ENCODE measurements at regions of chr9 and their contacts with region 1.

Region 1: GRCh38 chr9:16726718-16727451 is 143.6 kb downstream of the BNC2 start:
- DNase-seq: peak; percentile 83
- ATAC-seq: peak; percentile 83
- H3K4me3 ChIP-seq: peak overlapping the region; percentile 62
- H3K27ac ChIP-seq: peak overlapping the region; percentile 97
- H3K4me1 ChIP-seq: peaks cover 12% of the 10 kb centered on the region
- H3K27me3 ChIP-seq: no peaks in the 10 kb centered on the region
- CTCF ChIP-seq: no peak
- POLR2A ChIP-seq: peak; percentile 72
- RAD21 ChIP-seq: no peak

Region 2: DNA sequence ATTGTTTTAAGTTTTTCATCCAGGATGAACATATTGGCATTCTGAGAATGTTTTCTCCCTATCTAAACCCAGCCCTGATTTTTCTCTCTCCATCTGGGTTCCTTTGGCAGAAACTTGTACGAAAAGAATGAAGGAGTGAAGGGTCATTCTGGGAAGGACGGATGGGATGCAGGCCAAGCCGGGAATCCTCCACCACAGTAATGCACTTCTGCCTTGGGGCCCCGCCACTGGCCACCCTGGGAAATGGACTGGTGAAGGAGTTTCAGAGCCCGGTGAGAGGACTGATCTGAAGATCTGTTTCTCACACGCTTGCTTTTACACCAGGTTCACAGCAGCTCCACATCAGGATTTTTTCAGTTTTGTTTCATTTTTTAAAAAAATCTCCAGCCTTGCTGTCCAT is 411.2 kb before region 1 on chr9:
- CTCF ChIA-PET with region 1: no interaction called
- POLR2A ChIA-PET with region 1: no interaction called
- dilution Hi-C with region 1: no loop called
- in situ Hi-C with region 1: no loop called
- intact Hi-C with region 1: no loop called
- DNase-seq: no peak
- ATAC-seq: no peak; the same call in 1 of the 2 replicates
- H3K4me3 ChIP-seq: no peak overlapping the region
- H3K27ac ChIP-seq: no peak overlapping the region
- H3K4me1 ChIP-seq: peaks cover 1% of the 10 kb centered on the region; the same call in 1 of the 2 replicates
- H3K27me3 ChIP-seq: no peaks in the 10 kb centered on the region; the same call in 1 of the 2 replicates
- CTCF ChIP-seq: no peak
- POLR2A ChIP-seq: no peak
- RAD21 ChIP-seq: no peak

Region 3: GRCh38 chr9:16371306-16371705 is 355.6 kb before region 1 on chr9:
- CTCF ChIA-PET with region 1: no interaction called
- POLR2A ChIA-PET with region 1: no interaction called
- dilution Hi-C with region 1: no loop called
- in situ Hi-C with region 1: no loop called
- intact Hi-C with region 1: no loop called
- DNase-seq: no peak
- ATAC-seq: no peak
- H3K4me3 ChIP-seq: no peak overlapping the region
- H3K27ac ChIP-seq: no peak overlapping the region
- H3K4me1 ChIP-seq: peaks cover 10% of the 10 kb centered on the region
- H3K27me3 ChIP-seq: no peaks in the 10 kb centered on the region
- CTCF ChIP-seq: no peak
- POLR2A ChIP-seq: no peak
- RAD21 ChIP-seq: no peak

Region 4: DNA sequence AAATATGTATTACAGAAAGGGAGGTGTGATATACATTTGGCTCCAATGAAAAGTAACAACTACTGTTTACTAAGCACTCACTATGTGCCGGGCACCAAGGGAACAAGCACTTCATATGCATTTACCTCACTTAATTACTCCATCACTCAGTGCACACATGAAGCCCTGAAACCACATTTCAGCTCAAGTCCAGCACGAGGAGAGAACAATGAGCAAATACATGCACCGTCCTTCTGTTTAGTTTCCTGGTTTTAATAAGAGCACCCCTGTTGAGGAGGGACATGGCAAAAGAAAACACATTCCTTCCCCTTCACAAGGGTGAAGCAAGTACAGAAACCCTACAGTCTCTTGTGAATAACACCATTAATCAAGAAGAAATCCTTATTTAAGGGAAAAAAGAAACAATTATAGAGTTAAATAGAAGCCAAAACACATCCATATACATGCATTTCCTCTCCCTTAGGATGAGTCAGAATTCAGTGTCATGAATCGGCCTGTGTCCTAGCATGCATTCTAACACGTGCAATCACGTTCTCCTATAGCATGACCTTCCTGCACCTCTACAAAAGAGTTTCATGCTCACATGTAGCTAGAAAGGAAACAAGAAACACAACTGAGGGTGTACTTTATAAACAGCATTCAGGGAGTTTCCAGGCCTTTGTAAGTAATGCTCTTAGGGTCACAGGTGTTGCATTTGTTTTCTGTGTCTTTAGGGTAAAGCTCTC is 268.0 kb before region 1 on chr9:
- CTCF ChIA-PET with region 1: no interaction called
- POLR2A ChIA-PET with region 1: no interaction called
- dilution Hi-C with region 1: no loop called
- in situ Hi-C with region 1: no loop called
- intact Hi-C with region 1: no loop called
- DNase-seq: peak; percentile 76
- ATAC-seq: peak; percentile 79
- H3K4me3 ChIP-seq: no peak overlapping the region
- H3K27ac ChIP-seq: peak overlapping the region; percentile 45; the same call in 1 of the 2 replicates
- H3K4me1 ChIP-seq: peaks cover 11% of the 10 kb centered on the region
- H3K27me3 ChIP-seq: no peaks in the 10 kb centered on the region
- CTCF ChIP-seq: no peak
- POLR2A ChIP-seq: no peak
- RAD21 ChIP-seq: no peak

Region 5: DNA sequence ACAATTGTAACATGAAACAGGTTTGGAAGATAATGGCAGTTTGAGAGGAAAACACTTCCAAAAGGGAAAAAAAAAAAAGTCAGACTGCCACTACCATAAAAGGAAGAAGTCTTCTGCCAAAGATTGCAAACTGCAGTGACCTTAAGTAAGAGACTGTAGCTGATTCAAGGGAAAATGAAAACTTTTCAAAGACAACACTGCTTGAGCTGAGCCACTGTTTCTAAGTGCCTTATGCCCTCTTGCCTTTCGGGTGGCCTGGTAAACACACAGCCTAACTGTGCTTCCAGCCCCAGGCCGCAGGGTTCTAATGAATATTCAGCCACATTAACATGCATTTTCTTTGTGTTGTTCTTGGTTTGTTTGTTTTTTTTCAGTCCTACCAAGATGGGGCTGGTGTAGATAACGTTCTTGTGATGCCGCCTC is 211.0 kb before region 1 on chr9:
- CTCF ChIA-PET with region 1: no interaction called
- POLR2A ChIA-PET with region 1: no interaction called
- dilution Hi-C with region 1: no loop called
- in situ Hi-C with region 1: no loop called
- intact Hi-C with region 1: loop called (anchors 5 kb)
- DNase-seq: peak; percentile 84
- ATAC-seq: peak; percentile 81
- H3K4me3 ChIP-seq: no peak overlapping the region
- H3K27ac ChIP-seq: peak overlapping the region; percentile 100
- H3K4me1 ChIP-seq: peaks cover 18% of the 10 kb centered on the region
- H3K27me3 ChIP-seq: no peaks in the 10 kb centered on the region
- CTCF ChIP-seq: no peak
- POLR2A ChIP-seq: no peak
- RAD21 ChIP-seq: no peak

Region 6: DNA sequence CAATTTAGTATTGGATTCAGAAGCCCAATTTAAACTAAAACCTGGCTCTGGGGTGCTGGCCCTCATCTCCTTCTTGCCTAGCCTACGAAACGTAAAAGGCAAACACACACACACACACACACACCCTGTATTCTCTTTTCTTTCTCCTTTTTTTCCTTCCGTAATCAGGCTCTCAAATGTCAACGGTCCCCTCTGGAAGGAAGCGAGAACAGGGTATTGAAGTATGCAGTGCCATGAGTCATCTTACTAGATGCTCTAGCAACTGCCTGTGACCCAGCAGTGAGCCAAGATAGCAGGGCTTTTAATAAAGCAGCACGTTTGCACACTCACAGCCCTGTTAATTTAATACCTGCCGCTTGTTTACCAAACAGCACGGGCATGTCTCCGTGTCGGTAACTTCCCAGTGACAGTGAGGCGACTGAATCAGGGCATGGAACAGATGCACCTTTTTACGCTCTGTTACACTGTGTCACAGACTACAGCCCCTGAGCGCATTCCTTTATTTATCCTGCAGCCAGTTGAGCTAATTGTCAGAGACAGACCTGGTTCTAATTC is 100.2 kb before region 1 on chr9:
- CTCF ChIA-PET with region 1: no interaction called
- POLR2A ChIA-PET with region 1: interaction called, 3 read pairs
- dilution Hi-C with region 1: no loop called
- in situ Hi-C with region 1: no loop called
- intact Hi-C with region 1: loop called (anchors 5 kb)
- DNase-seq: peak; percentile 89
- ATAC-seq: peak; percentile 84
- H3K4me3 ChIP-seq: no peak overlapping the region
- H3K27ac ChIP-seq: peak overlapping the region; percentile 42
- H3K4me1 ChIP-seq: peaks cover 26% of the 10 kb centered on the region
- H3K27me3 ChIP-seq: no peaks in the 10 kb centered on the region
- CTCF ChIP-seq: no peak
- POLR2A ChIP-seq: no peak
- RAD21 ChIP-seq: no peak

Region 7: GRCh38 chr9:16828340-16829281 is 101.7 kb after region 1 on chr9:
- CTCF ChIA-PET with region 1: no interaction called
- POLR2A ChIA-PET with region 1: no interaction called
- dilution Hi-C with region 1: no loop called
- in situ Hi-C with region 1: no loop called
- intact Hi-C with region 1: loop called (anchors 5 kb)
- DNase-seq: peak; percentile 78
- ATAC-seq: peak; percentile 21
- H3K4me3 ChIP-seq: peak overlapping the region; percentile 22; the same call in 1 of the 2 replicates
- H3K27ac ChIP-seq: peak overlapping the region; percentile 93
- H3K4me1 ChIP-seq: peaks cover 22% of the 10 kb centered on the region
- H3K27me3 ChIP-seq: no peaks in the 10 kb centered on the region
- CTCF ChIP-seq: no peak
- POLR2A ChIP-seq: no peak
- RAD21 ChIP-seq: no peak

Region 8: DNA sequence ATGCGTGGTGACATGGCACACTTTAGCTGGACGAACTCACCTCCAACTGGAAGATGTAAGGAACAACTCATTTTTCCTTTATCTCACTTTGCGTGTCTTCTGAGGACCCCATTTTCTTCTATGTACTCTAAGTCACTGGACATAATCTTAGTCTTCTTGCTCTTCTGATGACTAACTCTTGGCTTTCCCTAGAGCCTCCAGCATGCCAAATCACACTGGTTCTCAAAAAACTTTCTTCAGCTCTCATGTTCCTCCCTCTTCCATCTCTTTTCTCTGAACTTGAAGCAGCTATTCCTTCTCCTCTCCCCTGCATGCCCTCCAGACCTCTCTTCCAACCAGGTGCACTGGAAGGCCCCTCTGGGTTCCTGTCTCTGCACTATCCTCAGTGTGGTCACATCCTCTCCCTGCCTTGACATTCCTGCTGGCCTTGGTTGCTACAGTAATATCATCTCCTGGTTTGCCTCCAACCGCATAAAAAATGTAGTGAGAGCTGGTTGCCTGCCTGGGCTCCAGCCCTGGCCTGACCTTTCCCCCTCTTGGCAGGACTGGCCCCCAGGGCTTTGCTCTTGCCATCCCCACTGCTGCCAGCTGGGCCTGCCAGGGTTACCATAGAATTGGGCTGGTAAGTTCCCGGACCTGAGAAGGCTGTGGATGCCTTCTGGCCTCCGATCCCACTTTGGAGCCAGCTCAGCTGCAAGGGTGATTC is 188.4 kb after region 1 on chr9:
- CTCF ChIA-PET with region 1: no interaction called
- POLR2A ChIA-PET with region 1: no interaction called
- dilution Hi-C with region 1: no loop called
- in situ Hi-C with region 1: no loop called
- intact Hi-C with region 1: no loop called
- DNase-seq: no peak
- ATAC-seq: no peak
- H3K4me3 ChIP-seq: no peak overlapping the region
- H3K27ac ChIP-seq: no peak overlapping the region
- H3K4me1 ChIP-seq: no peaks in the 10 kb centered on the region
- H3K27me3 ChIP-seq: no peaks in the 10 kb centered on the region
- CTCF ChIP-seq: no peak
- POLR2A ChIP-seq: no peak
- RAD21 ChIP-seq: no peak

Region 9: GRCh38 chr9:17063535-17064135 is 336.8 kb after region 1 on chr9:
- CTCF ChIA-PET with region 1: no interaction called
- POLR2A ChIA-PET with region 1: no interaction called
- dilution Hi-C with region 1: no loop called
- in situ Hi-C with region 1: no loop called
- intact Hi-C with region 1: loop called (anchors 10 kb)
- DNase-seq: peak; percentile 64
- ATAC-seq: peak; percentile 93
- H3K4me3 ChIP-seq: no peak overlapping the region
- H3K27ac ChIP-seq: no peak overlapping the region
- H3K4me1 ChIP-seq: no peaks in the 10 kb centered on the region
- H3K27me3 ChIP-seq: no peaks in the 10 kb centered on the region
- CTCF ChIP-seq: peak; percentile 67
- POLR2A ChIP-seq: no peak
- RAD21 ChIP-seq: peak; percentile 73